ENCODE measurements at regions of chr2 and their contacts with region 1.

Region 1: GRCh38 chr2:128681507-128681906 is 362.8 kb upstream of the HS6ST1 start:
- DNase-seq: peak; percentile 41
- ATAC-seq: peak; percentile 87
- H3K4me3 Mint-ChIP-seq: no peak overlapping the region
- H3K27ac Mint-ChIP-seq: no peak overlapping the region
- H3K4me1 Mint-ChIP-seq: peaks cover 30% of the 10 kb centered on the region
- H3K27me3 Mint-ChIP-seq: no peaks in the 10 kb centered on the region
- CTCF ChIP-seq: no peak

Region 2: GRCh38 chr2:128638341-128639119 is 43.0 kb before region 1 on chr2:
- CTCF ChIA-PET with region 1: interaction called, 11 read pairs
- POLR2A ChIA-PET with region 1: no interaction called
- DNase-seq: peak; percentile 90
- ATAC-seq: peak; percentile 95
- H3K4me3 Mint-ChIP-seq: no peak overlapping the region; the same call in 1 of the 2 replicates
- H3K27ac Mint-ChIP-seq: peak overlapping the region; percentile 99
- H3K4me1 Mint-ChIP-seq: peaks cover 76% of the 10 kb centered on the region
- H3K27me3 Mint-ChIP-seq: peaks cover 27% of the 10 kb centered on the region
- CTCF ChIP-seq: no peak

Region 3: DNA sequence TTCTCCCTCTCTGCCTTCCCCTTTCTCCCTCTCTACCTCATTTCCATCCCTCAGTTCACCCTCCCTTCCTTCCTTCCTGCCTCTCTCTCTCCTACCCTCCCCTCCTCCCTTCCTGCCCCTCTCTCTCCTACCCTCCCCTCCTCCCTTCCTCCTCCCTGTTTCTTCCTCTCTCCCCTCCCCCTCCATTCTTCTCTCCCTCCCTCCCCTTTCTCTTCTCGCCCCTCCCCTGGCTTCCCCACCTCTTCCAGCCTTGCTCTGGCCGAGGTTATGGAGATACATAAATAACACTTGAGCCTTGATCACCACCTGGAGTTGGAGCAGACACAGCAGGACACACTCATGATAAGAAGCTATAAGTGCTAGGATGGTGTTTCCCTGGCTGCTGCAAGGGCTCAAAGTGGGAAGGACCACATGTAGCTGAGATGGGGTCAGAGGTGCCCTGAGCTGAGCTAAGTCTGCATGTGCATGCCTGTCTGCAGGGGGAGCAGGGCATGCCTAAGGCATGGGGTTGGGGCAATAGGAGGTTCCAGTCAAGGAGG is 36.7 kb before region 1 on chr2:
- CTCF ChIA-PET with region 1: interaction called, 17 read pairs
- POLR2A ChIA-PET with region 1: no interaction called
- DNase-seq: peak; percentile 56
- ATAC-seq: peak; percentile 88
- H3K4me3 Mint-ChIP-seq: peak overlapping the region; percentile 15
- H3K27ac Mint-ChIP-seq: peak overlapping the region; percentile 98
- H3K4me1 Mint-ChIP-seq: peaks cover 76% of the 10 kb centered on the region
- H3K27me3 Mint-ChIP-seq: peaks cover 27% of the 10 kb centered on the region
- CTCF ChIP-seq: no peak

Measured in WTC11 (cell line).